ENCODE measurements at regions of chr1 and their contacts with region 1.

Region 1: GRCh38 chr1:22275721-22276395 is 133.0 kb upstream of the WNT4 start:
- DNase-seq: peak; percentile 56
- H3K4me3 Mint-ChIP-seq: no peak overlapping the region
- H3K27ac Mint-ChIP-seq: no peak overlapping the region
- H3K4me1 Mint-ChIP-seq: no peaks in the 10 kb centered on the region
- H3K27me3 Mint-ChIP-seq: peaks cover 72% of the 10 kb centered on the region
- CTCF ChIP-seq: peak; percentile 90

Region 2: DNA sequence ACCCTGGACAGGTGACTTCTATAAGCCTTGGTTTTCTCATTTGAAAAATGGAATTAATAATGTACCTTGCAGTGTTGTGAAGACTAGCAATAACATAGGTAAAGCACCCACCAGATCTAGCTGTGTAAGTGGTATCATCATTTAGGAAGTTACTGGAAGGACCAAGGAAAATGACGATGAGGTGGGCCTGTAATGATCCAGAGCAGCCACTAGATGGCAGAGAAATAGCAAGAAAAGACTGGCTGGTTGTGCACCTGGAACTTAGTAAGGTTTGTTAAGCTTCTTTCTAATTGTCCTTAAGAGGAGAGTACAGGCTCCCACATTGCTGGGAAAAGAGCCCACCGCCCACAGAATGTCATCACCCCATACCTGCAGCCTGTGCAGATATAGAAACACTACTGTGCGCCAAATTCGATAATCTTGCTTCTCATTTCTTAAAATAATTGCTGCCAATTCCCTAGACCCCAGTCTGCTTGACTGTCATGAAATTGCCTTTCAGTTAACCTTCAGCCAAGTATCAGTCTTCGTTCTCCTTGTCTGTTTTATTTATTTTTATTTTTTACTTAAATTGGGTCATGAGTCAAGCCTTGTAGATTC is 170.1 kb before region 1 on chr1:
- CTCF ChIA-PET with region 1: interaction called, 4 read pairs
- POLR2A ChIA-PET with region 1: no interaction called
- intact Hi-C with region 1: loop called (anchors 1 kb)
- DNase-seq: peak; percentile 49
- H3K4me3 Mint-ChIP-seq: no peak overlapping the region
- H3K27ac Mint-ChIP-seq: no peak overlapping the region
- H3K4me1 Mint-ChIP-seq: no peaks in the 10 kb centered on the region
- H3K27me3 Mint-ChIP-seq: no peaks in the 10 kb centered on the region
- CTCF ChIP-seq: peak; percentile 63

Region 3: GRCh38 chr1:22131875-22132486 is 143.9 kb before region 1 on chr1:
- CTCF ChIA-PET with region 1: interaction called, 11 read pairs
- POLR2A ChIA-PET with region 1: no interaction called
- intact Hi-C with region 1: loop called (anchors 1 kb)
- DNase-seq: peak; percentile 61
- H3K4me3 Mint-ChIP-seq: no peak overlapping the region
- H3K27ac Mint-ChIP-seq: no peak overlapping the region
- H3K4me1 Mint-ChIP-seq: peaks cover 3% of the 10 kb centered on the region
- H3K27me3 Mint-ChIP-seq: no peaks in the 10 kb centered on the region
- CTCF ChIP-seq: peak; percentile 95

Measured in MCF 10A (cell line).